ENCODE measurements at regions of chr3 and their contacts with region 1.

Region 1: DNA sequence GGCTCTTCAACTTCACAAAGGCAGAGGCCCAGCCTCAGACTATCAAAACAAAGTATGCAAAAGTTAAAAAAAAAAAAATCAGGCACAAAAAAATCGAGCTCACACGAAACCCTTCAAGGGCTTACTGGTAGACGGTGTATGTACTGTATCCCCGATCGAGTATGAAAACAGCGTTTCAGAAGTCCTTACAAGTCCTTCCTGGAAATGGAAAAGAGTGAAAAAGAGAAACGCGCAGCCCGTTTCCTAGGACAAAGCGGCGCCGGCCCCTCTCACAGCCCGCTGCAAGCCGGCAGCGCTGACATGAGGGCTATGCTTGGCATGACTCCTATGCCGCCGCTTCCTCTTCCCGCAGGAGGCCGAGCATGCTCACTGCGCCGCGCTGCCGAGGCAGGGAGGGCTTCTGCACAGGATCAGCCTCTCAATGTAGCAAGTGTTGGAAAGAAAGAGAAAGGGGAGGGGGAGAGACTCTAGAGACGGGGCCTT is at the start of gene VGLL4:
- DNase-seq: peak; percentile 88 to 92 (median 89)
- H3K4me3 ChIP-seq: peak within 1 kb of the TSS; percentile 42
- H3K27ac ChIP-seq: peak within 1 kb of the TSS; percentile 77 to 91
- H3K4me1 ChIP-seq: peaks cover 18% of the 10 kb centered on the region
- H3K27me3 ChIP-seq: no peaks in the 10 kb centered on the region
- CTCF ChIP-seq: no peak
- EP300 ChIP-seq: no peak
- POLR2A ChIP-seq: peak; percentile 53
- total RNA-seq, gene VGLL4: 80.5 to 120 (median 106) TPM

Region 2: DNA sequence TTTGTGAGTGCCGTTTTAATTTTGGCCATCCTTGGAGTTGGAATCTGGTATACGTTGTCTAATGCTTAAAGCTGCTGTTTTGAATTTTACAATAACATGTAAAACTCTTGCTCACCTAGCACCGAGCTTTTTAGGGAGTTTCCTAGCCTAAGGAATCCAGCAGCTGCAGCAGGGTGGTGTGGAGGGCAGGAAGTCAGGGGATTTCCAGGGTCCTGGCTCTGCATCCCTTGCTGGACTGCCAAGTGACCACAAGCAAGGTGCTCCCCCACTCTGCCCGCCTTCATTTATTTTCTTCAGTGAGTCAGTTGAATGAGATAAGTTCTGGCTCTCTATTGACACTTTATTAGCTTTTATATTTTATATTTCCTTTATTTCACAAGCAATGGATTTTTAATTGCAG is 257.8 kb before region 1 on chr3:
- intact Hi-C with region 1: loop called in 2 of 4 experiments (anchors 5 kb)
- DNase-seq: no peak
- H3K4me3 ChIP-seq: no peak overlapping the region
- H3K27ac ChIP-seq: no peak overlapping the region
- H3K4me1 ChIP-seq: peaks cover 12% of the 10 kb centered on the region
- H3K27me3 ChIP-seq: no peaks in the 10 kb centered on the region
- CTCF ChIP-seq: no peak
- EP300 ChIP-seq: no peak
- POLR2A ChIP-seq: no peak

Region 3: DNA sequence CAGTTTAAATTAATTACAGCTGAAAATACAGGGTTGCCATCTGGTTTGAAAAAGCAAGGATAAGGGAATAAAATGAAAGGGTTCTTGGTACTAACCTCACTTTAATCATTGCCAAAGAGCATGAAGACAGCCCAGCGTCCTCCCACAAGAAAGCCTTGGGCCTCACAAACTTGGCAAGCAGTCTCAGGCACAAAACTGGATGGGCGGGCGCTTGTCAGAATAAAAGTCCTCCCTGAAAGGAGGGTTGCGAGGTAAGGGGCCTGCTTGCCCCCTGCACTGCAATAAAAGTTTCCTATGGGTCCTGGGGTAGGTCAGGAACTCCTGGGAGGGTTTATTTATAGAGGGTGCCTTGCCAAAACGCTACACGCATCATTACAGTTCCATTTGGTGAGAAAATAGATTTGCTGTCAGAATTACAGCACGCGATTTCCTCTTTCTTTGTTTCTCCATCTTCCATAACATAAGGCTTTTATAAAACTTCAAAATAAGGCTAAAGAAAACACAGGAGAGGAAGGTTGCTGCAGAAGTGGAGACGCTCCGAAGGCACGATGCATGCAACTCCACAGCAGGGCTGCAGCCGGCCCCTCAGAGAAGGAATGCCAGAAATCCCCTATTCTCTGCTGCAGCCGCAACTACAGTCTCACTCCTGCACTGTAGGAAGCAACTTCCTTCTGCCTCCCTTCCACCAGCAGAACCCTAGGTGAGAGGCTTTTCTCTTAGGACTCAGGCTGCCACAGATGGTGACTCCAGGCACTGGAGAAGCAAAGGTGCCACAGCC is 61.3 kb before region 1 on chr3:
- intact Hi-C with region 1: loop called in 2 of 4 experiments (anchors 5 to 10 kb)
- DNase-seq: peak; percentile 80 to 86 (median 84)
- H3K4me3 ChIP-seq: peak overlapping the region; percentile 38
- H3K27ac ChIP-seq: peak overlapping the region; percentile 3 to 74
- H3K4me1 ChIP-seq: peaks cover 27% of the 10 kb centered on the region
- H3K27me3 ChIP-seq: no peaks in the 10 kb centered on the region
- CTCF ChIP-seq: no peak
- EP300 ChIP-seq: no peak
- POLR2A ChIP-seq: no peak

Region 4: GRCh38 chr3:11601446-11602238 is 42.0 kb before region 1 on chr3:
- intact Hi-C with region 1: loop called in 2 of 4 experiments (anchors 5 kb)
- DNase-seq: peak in 2 of 5 donors; percentile 48 to 64
- H3K4me3 ChIP-seq: no peak overlapping the region
- H3K27ac ChIP-seq: peak overlapping the region; percentile 47 to 50
- H3K4me1 ChIP-seq: peaks cover 41% of the 10 kb centered on the region
- H3K27me3 ChIP-seq: no peaks in the 10 kb centered on the region
- CTCF ChIP-seq: no peak
- EP300 ChIP-seq: no peak
- POLR2A ChIP-seq: no peak

Measured in ovary (tissue), 10 donors.